ENCODE measurements at regions of chr17 and their contacts with region 1.

Region 1: GRCh38 chr17:45828628-45829027 is 16.1 kb upstream of the SPPL2C start:
- DNase-seq: no peak
- H3K4me3 ChIP-seq: no peak overlapping the region
- CTCF ChIP-seq: no peak
- POLR2A ChIP-seq: no peak

Region 2: DNA sequence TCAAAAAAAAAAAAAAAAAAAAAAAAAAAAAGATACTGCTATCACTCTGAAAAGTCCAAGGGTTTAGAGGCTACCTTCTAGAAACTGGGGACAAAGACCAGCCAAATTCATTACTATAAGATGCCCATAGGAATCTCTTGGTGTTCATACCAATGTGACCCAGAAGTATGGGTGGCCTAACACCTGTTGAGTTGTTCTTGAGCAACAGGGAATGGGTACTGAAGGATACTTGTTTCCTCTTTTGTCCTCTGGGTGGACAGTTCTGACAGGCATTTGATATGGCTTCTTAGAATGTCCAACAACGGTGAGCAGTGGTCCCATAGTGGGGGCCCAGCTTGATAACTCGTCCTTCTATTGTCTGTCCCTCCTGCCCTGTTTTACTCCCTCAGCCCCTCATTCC is 196.7 kb before region 1 on chr17:
- intact Hi-C with region 1: no loop called
- DNase-seq: no peak
- H3K4me3 ChIP-seq: no peak overlapping the region
- CTCF ChIP-seq: no peak
- POLR2A ChIP-seq: no peak

Region 3: DNA sequence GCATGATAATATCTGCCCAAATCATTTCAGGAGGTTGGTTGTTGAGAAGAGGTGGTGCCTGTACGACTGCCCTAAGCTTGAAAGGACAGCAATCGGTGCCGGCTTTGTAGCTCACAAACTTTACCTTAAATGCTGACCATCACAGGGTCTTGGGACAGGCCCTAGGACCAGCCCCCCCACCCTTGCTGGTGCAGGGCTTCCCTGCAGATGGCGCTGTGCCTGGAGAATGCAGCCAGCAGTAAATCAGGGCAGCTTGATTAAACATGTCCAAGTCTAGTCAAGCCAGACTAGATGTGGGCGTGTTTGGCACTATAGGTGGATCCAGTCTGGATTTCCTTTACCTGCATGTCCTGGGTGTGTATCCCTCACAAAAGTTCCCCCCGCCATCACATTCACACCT is 180.0 kb before region 1 on chr17:
- intact Hi-C with region 1: loop called (anchors 5 kb)
- DNase-seq: no peak
- H3K4me3 ChIP-seq: no peak overlapping the region
- CTCF ChIP-seq: no peak
- POLR2A ChIP-seq: no peak

Region 4: GRCh38 chr17:45739786-45740185 is 88.8 kb before region 1 on chr17:
- intact Hi-C with region 1: loop called (anchors 10 kb)
- DNase-seq: peak in 1 of 2 donors; percentile 57
- H3K4me3 ChIP-seq: no peak overlapping the region
- CTCF ChIP-seq: no peak
- POLR2A ChIP-seq: no peak